Panc1 (cell line): ENCODE measurements at regions of chr17 and their contacts with region 1.

Region 1: DNA sequence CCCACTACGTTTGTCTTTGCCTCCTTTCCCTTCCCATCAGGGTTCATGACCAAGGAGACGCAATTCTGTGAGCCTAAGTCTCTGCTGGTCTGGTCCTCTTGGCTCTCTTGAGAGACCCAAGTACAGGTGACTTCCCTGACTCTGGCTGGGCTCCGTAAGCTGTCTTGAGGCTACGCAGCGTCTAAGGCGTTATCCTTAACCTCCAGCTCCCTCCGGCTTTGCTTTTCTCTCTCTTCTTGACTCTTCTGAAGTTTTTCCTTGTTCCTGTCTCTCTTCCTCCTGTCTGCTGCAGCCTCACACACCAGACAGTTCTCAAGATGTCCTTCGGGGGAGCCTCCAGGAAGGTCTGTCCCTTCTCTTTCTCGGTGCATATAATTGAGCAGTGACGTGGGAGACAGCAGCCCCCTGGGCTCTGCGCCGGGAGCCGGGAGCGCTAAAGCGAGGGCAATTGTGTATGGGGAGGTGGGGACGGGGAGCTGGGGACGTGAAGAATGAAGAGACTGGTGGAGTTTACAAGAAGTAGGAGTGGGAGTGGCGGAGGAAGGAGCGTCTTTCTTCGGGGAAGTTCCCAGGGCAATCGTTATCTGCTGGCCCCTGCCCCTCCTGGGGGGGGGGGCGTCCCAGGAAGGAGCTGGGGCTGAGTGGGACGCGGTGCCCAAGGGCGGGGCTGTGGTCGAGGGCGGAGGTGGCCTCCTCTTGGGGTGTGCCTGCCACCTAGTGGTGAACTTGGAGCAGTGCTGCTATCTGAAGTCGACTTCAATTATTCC is 6.9 kb upstream of the PIRT start:
- DNase-seq: peak; percentile 43
- ATAC-seq: peak; percentile 96
- H3K4me3 ChIP-seq: peak overlapping the region; percentile 38 to 57
- H3K27ac ChIP-seq: no peak overlapping the region
- H3K4me1 ChIP-seq: no peaks in the 10 kb centered on the region
- H3K27me3 ChIP-seq: no peaks in the 10 kb centered on the region
- CTCF ChIP-seq: peak; percentile 94

Region 2: DNA sequence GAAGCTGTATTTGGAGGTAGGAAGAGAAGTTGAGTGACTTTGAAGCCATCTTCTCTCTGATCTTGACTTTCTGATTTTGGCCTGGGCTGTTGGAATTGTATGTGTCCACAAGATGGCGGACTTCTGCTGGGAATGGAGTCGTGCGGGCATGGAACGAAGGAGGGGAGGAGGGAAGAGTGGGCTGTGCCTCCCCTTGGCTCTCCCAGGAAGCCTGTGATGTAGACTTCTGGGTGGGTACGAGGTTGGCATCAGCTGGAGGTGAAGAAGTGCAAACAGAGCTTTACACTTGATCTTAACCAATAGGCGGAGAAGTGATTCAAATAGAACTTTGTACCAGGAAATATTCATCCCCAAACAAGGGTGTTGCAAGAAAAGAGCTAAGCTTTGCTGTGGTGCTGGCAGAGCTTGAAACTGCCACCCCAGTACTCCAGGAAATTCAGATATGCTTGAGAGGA is 107.6 kb before region 1 on chr17:
- CTCF ChIA-PET with region 1: interaction called, 13 read pairs
- POLR2A ChIA-PET with region 1: no interaction called
- in situ Hi-C with region 1: no loop called
- intact Hi-C with region 1: loop called (anchors 2 kb)
- DNase-seq: peak; percentile 42
- ATAC-seq: peak; percentile 78
- H3K4me3 ChIP-seq: no peak overlapping the region
- H3K27ac ChIP-seq: no peak overlapping the region
- H3K4me1 ChIP-seq: no peaks in the 10 kb centered on the region
- H3K27me3 ChIP-seq: no peaks in the 10 kb centered on the region
- CTCF ChIP-seq: peak; percentile 85

Region 3: DNA sequence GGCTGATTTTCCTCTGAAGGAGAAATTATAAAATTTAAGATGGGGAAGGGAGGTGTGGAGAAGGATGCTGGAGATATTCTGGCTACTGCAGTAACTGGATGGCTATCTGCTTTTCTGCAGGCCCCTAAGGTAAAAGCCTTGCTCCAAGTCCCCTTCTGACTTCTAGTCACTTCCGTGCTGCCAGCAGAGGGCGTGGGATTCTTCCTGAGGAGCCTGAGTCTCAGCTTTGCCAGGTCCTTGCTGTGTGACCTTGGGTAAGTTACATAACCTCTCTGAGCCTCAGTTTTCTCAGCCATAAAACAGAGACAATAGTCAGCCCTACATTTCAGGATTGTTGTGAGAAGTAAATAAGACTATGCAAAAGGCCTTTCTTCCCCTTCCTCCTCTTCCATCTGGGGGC is 90.7 kb before region 1 on chr17:
- CTCF ChIA-PET with region 1: interaction called, 4 read pairs
- POLR2A ChIA-PET with region 1: no interaction called
- in situ Hi-C with region 1: no loop called
- intact Hi-C with region 1: loop called (anchors 1 kb)
- DNase-seq: no peak
- ATAC-seq: peak; percentile 70
- H3K4me3 ChIP-seq: no peak overlapping the region
- H3K27ac ChIP-seq: no peak overlapping the region
- H3K4me1 ChIP-seq: no peaks in the 10 kb centered on the region; the same call in 1 of the 2 replicates
- H3K27me3 ChIP-seq: no peaks in the 10 kb centered on the region
- CTCF ChIP-seq: peak; percentile 71

Region 4: DNA sequence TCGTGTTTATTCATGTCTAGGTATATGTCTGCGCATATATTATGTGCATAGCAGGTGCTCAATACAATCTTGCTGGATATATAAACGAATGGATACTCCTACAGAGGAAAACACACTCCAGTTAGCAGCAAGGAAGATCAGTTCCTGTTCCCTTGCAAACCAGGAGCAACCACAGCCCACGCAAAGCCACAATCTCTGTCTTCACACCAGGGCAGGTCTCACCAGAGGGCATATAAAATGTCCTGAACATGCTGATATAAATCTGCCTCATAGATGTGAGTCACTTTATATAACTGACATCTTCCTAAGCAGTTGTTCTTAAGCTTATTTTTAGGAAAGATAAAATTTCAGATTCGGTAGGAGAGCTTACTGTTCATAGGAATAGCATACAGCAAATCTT is 94.6 kb after region 1 on chr17:
- CTCF ChIA-PET with region 1: no interaction called
- POLR2A ChIA-PET with region 1: no interaction called
- in situ Hi-C with region 1: no loop called
- intact Hi-C with region 1: no loop called
- DNase-seq: no peak
- ATAC-seq: no peak
- H3K4me3 ChIP-seq: no peak overlapping the region
- H3K27ac ChIP-seq: no peak overlapping the region
- H3K4me1 ChIP-seq: no peaks in the 10 kb centered on the region
- H3K27me3 ChIP-seq: no peaks in the 10 kb centered on the region
- CTCF ChIP-seq: no peak